ENCODE measurements at regions of chr5 and their contacts with region 1.

Region 1: DNA sequence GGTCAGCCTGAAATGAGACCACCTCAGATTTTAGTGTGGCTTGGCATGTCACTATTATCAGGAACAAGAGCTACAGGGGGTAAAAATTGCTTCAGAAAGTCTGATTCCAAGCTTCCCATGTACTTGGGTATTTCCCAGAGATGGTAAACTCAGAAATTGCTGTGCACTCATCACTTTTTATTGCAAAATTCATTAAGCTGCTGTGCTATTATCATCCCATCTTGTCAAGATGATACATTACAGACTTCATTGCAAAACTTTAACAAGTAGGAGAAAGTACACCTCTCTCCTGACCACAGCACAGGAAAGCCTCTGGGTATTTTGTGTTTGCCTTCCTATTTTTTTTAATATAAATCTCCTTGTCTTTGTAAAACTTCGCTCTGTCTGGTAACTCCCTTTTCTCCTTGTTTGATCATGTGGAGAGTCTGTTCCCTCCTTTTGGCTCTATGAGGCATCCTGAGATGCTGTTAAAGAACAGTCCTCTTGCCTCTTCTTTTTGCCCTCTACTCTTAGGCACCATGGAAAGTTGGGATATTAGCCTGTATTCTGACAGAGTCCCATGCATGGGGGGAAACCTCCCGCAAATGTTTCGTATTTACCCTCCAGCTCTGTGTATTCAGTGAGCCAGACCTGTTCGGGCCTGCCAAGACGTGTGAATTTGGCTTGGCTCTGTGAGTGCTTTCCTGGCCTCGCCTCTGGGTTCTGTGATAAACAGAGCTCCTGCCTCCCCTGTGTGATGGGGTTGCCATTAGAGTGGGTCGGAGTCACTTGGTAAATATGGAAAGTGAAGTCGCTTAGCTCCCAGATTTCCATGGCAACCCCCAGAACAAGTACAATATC is 260.7 kb downstream of the NR3C1 start:
- DNase-seq: no peak
- ATAC-seq: no peak
- H3K4me3 ChIP-seq: no peak overlapping the region
- H3K27ac ChIP-seq: no peak overlapping the region
- H3K4me1 ChIP-seq: no peaks in the 10 kb centered on the region
- H3K27me3 ChIP-seq: no peaks in the 10 kb centered on the region
- CTCF ChIP-seq: no peak
- EP300 ChIP-seq: no peak
- POLR2A ChIP-seq: no peak
- RAD21 ChIP-seq: no peak

Region 2: GRCh38 chr5:142587354-142587965 is 555.4 kb before region 1 on chr5:
- CTCF ChIA-PET with region 1: no interaction called
- POLR2A ChIA-PET with region 1: no interaction called
- RAD21 ChIA-PET with region 1: no interaction called
- SMC1A ChIA-PET with region 1: no interaction called
- in situ Hi-C with region 1: no loop called
- intact Hi-C with region 1: no loop called
- DNase-seq: no peak
- ATAC-seq: no peak; the same call in 2 of the 3 replicates
- H3K4me3 ChIP-seq: no peak overlapping the region
- H3K27ac ChIP-seq: no peak overlapping the region
- H3K4me1 ChIP-seq: no peaks in the 10 kb centered on the region
- H3K27me3 ChIP-seq: no peaks in the 10 kb centered on the region; a peak in 1 of 4 replicates
- CTCF ChIP-seq: peak; percentile 34 to 51 (median 49)
- EP300 ChIP-seq: no peak
- POLR2A ChIP-seq: no peak
- RAD21 ChIP-seq: 0 out of 2 replicates have a peak, but pooled peaks have one; percentile 26

Region 3: GRCh38 chr5:143153332-143154119 is 10.7 kb after region 1 on chr5:
- CTCF ChIA-PET with region 1: interaction called, 4 read pairs
- POLR2A ChIA-PET with region 1: interaction called, 5 read pairs
- RAD21 ChIA-PET with region 1: no interaction called
- SMC1A ChIA-PET with region 1: interaction called, 11 read pairs
- in situ Hi-C with region 1: no loop called
- intact Hi-C with region 1: no loop called
- DNase-seq: no peak
- ATAC-seq: peak; percentile 54
- H3K4me3 ChIP-seq: no peak overlapping the region
- H3K27ac ChIP-seq: no peak overlapping the region
- H3K4me1 ChIP-seq: no peaks in the 10 kb centered on the region
- H3K27me3 ChIP-seq: no peaks in the 10 kb centered on the region
- CTCF ChIP-seq: no peak
- EP300 ChIP-seq: no peak
- POLR2A ChIP-seq: no peak
- RAD21 ChIP-seq: no peak

Measured in GM12878 (cell line).